Activated CD4-positive, alpha-beta memory T cell treated with anti-CD3 and anti-CD28 coated beads, Interleukin-2, amount 10 ng/mL, durations not matched to agents 7 days and 5 days (primary cell): ENCODE measurements at regions of chr7 and their contacts with region 1.

Region 1: DNA sequence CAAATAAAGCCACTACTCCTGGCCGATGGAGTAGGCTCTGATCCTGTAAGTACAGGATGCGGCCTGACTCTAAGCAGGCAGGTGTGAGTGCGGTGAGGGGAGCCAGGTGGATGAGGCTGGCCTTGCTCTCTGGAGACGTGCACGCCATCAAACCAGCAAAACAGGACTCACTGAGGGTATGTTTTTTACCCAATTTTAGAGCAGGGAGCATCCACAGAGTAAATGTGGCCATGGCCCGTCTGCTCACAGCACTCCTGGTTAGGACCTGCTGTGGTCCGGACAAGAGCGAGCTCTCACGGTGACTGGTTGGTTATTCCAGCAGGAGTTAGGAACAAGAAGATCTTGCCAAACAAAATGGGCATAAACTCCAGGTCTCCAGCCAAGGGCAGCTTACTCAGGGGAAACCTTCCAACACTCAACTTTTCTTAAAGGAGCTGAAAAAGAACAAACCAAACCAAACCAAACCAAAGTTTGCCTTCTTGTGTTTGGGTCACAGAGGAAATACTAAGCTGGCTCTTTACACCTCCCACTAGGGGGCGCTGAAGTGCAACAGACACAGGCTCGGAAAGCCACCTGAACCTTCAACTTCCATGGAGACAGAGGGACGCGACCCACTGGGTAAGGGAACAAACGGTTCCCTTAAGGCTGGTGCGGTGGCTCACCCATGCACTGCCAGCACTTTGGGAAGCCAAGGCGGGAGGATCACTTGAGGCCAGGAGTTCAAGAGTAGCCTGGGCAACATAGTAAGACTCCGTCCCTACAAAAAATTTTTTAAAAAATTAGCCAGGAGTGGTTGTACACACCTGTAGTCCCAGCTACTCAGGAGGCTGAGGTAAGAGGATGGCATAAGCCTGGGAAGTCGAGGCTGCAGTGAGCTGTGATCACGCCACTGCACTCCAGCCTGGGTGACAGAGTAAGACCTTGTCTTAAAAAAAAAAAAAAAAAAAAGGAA is 122.4 kb downstream of the CLEC2L start:
- DNase-seq: peak; percentile 85
- H3K4me3 Mint-ChIP-seq: no peak overlapping the region
- H3K27ac Mint-ChIP-seq: no peak overlapping the region
- H3K4me1 Mint-ChIP-seq: peaks cover 43% of the 10 kb centered on the region
- H3K27me3 Mint-ChIP-seq: no peaks in the 10 kb centered on the region

Region 2: GRCh38 chr7:139602143-139602722 is 43.6 kb before region 1 on chr7:
- CTCF ChIA-PET with region 1: interaction called, 20 read pairs
- POLR2A ChIA-PET with region 1: no interaction called
- DNase-seq: no peak
- H3K4me3 Mint-ChIP-seq: no peak overlapping the region
- H3K27ac Mint-ChIP-seq: no peak overlapping the region
- H3K4me1 Mint-ChIP-seq: no peaks in the 10 kb centered on the region
- H3K27me3 Mint-ChIP-seq: no peaks in the 10 kb centered on the region

Region 3: DNA sequence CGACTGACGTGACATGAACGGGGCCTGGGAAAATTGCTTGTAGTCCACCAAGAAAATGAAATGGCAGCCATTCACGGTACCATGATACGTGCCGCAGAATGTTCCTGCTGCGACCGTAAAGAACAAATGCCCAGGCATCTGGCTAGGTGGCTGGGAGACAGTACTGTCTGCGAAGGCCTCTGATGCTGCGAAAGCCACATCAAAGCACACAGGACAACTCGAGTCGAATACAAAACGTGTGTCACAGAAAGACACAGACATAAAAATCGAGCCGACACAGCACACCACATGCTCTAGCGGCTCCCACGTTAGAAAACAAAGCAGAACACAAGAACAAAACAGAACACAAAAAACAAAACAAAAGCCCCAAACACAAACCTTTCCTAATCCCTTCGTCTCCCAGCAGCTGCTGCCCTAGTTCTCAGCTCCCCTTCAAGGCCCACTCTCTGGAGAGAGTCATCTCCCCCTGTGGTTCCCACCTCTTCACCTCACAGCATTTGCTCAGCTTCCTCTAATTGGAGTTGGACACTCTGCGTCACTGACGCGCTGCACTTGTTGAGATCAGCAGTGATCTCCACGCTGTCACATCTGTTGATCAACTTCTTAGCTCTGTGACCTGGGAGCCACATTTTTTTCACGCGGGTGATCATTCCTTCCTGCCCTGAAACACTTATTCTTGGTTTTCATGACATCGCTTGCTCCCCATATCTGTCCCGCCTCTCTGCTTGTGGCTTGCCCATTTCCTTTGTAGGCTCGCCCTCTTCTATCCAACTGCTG is 10.1 kb before region 1 on chr7:
- CTCF ChIA-PET with region 1: interaction called, 31 read pairs
- POLR2A ChIA-PET with region 1: interaction called, 4 read pairs
- DNase-seq: peak; percentile 57
- H3K4me3 Mint-ChIP-seq: peak overlapping the region; percentile 25
- H3K27ac Mint-ChIP-seq: peak overlapping the region; percentile 59
- H3K4me1 Mint-ChIP-seq: peaks cover 35% of the 10 kb centered on the region
- H3K27me3 Mint-ChIP-seq: no peaks in the 10 kb centered on the region

Region 4: GRCh38 chr7:139680676-139681462 is 35.0 kb after region 1 on chr7:
- CTCF ChIA-PET with region 1: interaction called, 12 read pairs
- POLR2A ChIA-PET with region 1: interaction called, 3 read pairs
- DNase-seq: peak; percentile 87
- H3K4me3 Mint-ChIP-seq: peak overlapping the region; percentile 31
- H3K27ac Mint-ChIP-seq: peak overlapping the region; percentile 88
- H3K4me1 Mint-ChIP-seq: peaks cover 59% of the 10 kb centered on the region
- H3K27me3 Mint-ChIP-seq: no peaks in the 10 kb centered on the region

Region 5: GRCh38 chr7:140003913-140004382 is 358.1 kb after region 1 on chr7:
- CTCF ChIA-PET with region 1: interaction called, 114 read pairs
- POLR2A ChIA-PET with region 1: interaction called, 6 read pairs
- DNase-seq: peak; percentile 39
- H3K4me3 Mint-ChIP-seq: no peak overlapping the region
- H3K27ac Mint-ChIP-seq: no peak overlapping the region
- H3K4me1 Mint-ChIP-seq: no peaks in the 10 kb centered on the region
- H3K27me3 Mint-ChIP-seq: no peaks in the 10 kb centered on the region